ENCODE measurements at regions of chr2 and their contacts with region 1.

Region 1: DNA sequence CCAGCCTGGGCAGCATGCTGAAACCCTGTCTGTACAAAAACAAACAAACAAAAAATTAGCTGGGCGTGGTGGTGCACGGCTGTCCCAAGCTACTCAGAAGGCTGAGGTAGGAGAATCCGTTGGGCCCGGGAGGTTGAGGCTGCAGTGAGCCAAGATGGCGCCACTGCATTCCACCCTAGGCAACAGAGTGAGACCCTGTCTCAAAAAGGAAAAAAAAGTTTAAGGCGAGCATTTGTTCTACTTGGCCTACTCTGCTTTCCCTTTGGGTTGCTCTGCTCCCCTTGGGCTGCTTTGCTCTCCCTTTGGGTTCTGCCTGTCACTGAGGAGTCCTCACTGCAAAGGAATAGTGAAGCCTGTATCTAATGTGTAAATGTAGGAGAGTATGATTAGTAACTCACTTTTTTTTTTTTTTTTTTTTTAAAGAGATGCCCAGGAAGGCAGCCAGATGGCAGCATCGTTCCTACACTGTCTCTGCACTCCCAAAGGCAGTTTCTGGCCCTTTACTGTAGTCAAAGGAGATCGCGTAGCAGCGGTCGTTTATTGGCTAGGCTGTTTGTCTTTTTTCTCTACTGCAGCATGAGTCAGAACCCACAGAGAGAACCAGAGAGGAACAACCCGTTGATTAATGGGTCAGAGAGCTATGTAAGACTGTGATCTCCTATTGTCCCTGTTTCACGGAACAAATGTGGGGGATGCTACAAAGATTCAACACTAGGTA is 118.3 kb upstream of the CWC22 start:
- DNase-seq: peak; percentile 65 to 72
- H3K4me3 ChIP-seq: no peak overlapping the region
- H3K4me3 Mint-ChIP-seq: no peak overlapping the region
- H3K27ac Mint-ChIP-seq: no peak overlapping the region
- H3K4me1 ChIP-seq: no peaks in the 10 kb centered on the region
- H3K4me1 Mint-ChIP-seq: no peaks in the 10 kb centered on the region
- H3K27me3 ChIP-seq: no peaks in the 10 kb centered on the region
- H3K27me3 Mint-ChIP-seq: peaks cover 6% of the 10 kb centered on the region
- CTCF ChIP-seq: peak; percentile 45 to 76

Region 2: DNA sequence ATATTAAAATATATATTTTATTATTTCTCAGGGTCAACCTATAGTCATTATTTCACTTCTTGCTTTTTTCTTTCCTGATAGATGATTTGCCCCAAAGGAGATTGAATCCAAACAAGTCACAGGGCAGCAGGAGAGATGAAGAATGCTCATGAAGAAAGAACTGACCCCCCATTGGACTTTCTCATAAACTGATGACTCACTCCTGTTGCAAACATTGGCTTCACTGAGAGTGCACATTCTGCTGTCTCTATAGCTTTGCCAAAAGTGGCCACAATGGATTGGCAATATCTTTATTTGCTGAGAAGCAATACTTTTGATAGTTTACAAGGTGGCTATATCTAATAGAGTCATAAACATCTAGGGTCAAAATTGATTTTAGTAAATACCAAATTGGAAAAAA is 208.1 kb before region 1 on chr2:
- CTCF ChIA-PET with region 1: no interaction called
- POLR2A ChIA-PET with region 1: no interaction called
- intact Hi-C with region 1: no loop called
- DNase-seq: no peak
- H3K4me3 ChIP-seq: no peak overlapping the region
- H3K4me3 Mint-ChIP-seq: no peak overlapping the region
- H3K27ac Mint-ChIP-seq: no peak overlapping the region
- H3K4me1 ChIP-seq: no peaks in the 10 kb centered on the region
- H3K4me1 Mint-ChIP-seq: no peaks in the 10 kb centered on the region
- H3K27me3 ChIP-seq: no peaks in the 10 kb centered on the region
- H3K27me3 Mint-ChIP-seq: peaks cover 10% of the 10 kb centered on the region
- CTCF ChIP-seq: no peak

Region 3: DNA sequence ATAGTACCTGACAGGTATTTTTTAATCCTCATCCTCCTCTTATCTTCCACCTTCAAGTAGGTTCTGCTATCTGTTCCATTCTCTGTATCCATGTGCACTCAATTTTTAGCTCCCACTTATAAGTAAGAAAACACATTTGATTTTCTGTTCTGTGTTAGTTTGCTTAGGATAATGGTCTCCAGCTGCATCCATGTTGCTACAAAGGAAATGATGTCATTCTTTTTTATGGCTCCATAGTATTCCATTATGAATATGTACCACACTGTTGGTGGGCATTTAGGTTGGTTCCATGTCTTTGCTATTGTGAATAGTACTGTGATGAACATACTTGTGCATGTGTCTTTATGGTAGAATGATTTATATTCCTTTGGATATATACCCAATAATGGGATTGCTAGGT is 31.4 kb before region 1 on chr2:
- CTCF ChIA-PET with region 1: no interaction called
- POLR2A ChIA-PET with region 1: no interaction called
- intact Hi-C with region 1: no loop called
- DNase-seq: no peak
- H3K4me3 ChIP-seq: no peak overlapping the region
- H3K4me3 Mint-ChIP-seq: no peak overlapping the region
- H3K27ac Mint-ChIP-seq: no peak overlapping the region
- H3K4me1 ChIP-seq: no peaks in the 10 kb centered on the region
- H3K4me1 Mint-ChIP-seq: no peaks in the 10 kb centered on the region
- H3K27me3 ChIP-seq: no peaks in the 10 kb centered on the region
- H3K27me3 Mint-ChIP-seq: no peaks in the 10 kb centered on the region
- CTCF ChIP-seq: no peak

Region 4: GRCh38 chr2:180481998-180482397 is 356.6 kb after region 1 on chr2:
- CTCF ChIA-PET with region 1: no interaction called
- POLR2A ChIA-PET with region 1: no interaction called
- intact Hi-C with region 1: loop called (anchors 1 kb)
- DNase-seq: no peak
- H3K4me3 ChIP-seq: no peak overlapping the region
- H3K4me3 Mint-ChIP-seq: no peak overlapping the region
- H3K27ac Mint-ChIP-seq: no peak overlapping the region
- H3K4me1 ChIP-seq: no peaks in the 10 kb centered on the region
- H3K4me1 Mint-ChIP-seq: no peaks in the 10 kb centered on the region
- H3K27me3 ChIP-seq: no peaks in the 10 kb centered on the region
- H3K27me3 Mint-ChIP-seq: peaks cover 2% of the 10 kb centered on the region
- CTCF ChIP-seq: no peak

Region 5: GRCh38 chr2:180699657-180700361 is 574.4 kb after region 1 on chr2:
- CTCF ChIA-PET with region 1: no interaction called
- POLR2A ChIA-PET with region 1: no interaction called
- intact Hi-C with region 1: loop called (anchors 10 kb)
- DNase-seq: no peak
- H3K4me3 ChIP-seq: no peak overlapping the region
- H3K4me3 Mint-ChIP-seq: no peak overlapping the region
- H3K27ac Mint-ChIP-seq: no peak overlapping the region
- H3K4me1 ChIP-seq: no peaks in the 10 kb centered on the region
- H3K4me1 Mint-ChIP-seq: no peaks in the 10 kb centered on the region
- H3K27me3 ChIP-seq: no peaks in the 10 kb centered on the region
- H3K27me3 Mint-ChIP-seq: peaks cover 4% of the 10 kb centered on the region
- CTCF ChIP-seq: no peak

Region 6: DNA sequence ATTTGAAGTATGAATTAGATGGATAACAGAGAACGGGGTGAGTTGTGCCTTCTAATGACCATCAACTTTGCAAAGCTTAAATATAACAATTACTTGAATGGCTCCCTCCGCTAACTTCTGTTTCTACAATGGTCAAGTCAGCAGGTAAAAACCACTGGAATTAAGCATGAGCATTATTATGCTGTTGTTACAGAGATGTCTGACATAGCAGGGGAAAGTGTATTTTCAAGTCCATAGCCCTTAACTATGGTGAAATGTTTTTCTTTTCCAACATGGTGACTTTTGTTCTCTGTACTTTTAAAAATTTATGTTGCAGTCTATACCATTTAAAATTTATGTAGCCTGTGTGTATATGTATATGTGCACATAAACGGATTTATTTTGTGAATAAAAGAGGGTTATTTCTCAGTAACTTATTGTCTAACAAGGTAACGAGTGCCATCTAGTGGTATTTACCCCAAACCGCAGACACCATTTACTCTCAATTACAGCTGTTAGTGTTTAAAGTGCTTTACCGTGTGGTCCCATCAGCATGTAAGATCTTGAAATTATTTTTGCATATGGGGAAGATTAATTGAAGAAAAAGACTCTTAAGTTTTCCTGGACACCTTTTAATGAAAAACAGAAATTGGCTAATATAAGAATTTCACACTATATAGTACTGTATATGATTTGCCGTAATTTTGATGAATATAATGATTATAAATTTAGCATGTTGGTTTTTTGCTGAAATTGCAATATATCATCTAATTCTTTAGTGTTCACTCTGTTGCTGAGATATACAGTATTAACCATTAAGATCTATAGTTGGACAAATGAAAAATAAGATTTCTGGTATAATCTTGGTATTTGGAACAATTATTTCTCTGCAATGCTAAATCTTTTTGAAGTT is 933.2 kb after region 1 on chr2:
- CTCF ChIA-PET with region 1: interaction called, 12 read pairs
- POLR2A ChIA-PET with region 1: no interaction called
- intact Hi-C with region 1: loop called (anchors 1 kb)
- DNase-seq: peak in 1 of 2 experiments; percentile 28
- H3K4me3 ChIP-seq: no peak overlapping the region
- H3K4me3 Mint-ChIP-seq: no peak overlapping the region
- H3K27ac Mint-ChIP-seq: no peak overlapping the region
- H3K4me1 ChIP-seq: no peaks in the 10 kb centered on the region
- H3K4me1 Mint-ChIP-seq: no peaks in the 10 kb centered on the region
- H3K27me3 ChIP-seq: no peaks in the 10 kb centered on the region
- H3K27me3 Mint-ChIP-seq: peaks cover 2% of the 10 kb centered on the region
- CTCF ChIP-seq: peak; percentile 57 to 73

Measured in Caco-2 (cell line).